Ascending aorta (tissue), 2 donors: ENCODE measurements at regions of chr14 and their contacts with region 1.

Region 1: DNA sequence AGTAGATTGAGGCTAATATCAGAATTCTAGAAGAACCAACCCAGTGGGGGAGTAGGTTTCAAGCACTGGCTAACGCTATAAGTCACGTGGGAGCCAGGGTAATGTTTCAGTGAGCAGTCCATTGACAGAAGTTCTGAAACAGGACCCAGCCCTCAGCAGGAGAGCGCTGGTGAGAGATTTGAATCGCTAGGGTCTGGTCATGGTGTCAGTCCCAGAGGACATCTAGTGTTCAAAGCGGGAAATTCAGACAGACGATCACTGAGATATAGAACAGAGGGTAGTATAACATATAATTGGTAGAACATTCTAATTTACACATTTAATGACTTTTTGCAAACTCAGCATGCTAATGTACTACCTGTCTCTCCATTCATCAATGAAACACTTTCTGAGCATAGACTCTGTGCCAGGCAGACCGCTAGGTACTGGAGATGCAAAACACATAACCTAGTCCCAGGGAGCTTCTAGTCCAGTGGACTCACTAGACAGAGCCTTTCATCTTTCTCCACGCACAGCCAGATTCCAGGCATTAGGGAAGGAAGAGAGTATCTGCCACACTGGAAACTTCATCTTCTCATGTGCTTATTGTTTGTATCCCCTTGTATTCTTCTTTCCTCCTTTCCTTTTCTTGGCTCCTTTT is 35.4 kb upstream of the RNASE3 start:
- DNase-seq: peak in 1 of 2 donors; percentile 70
- H3K4me3 ChIP-seq: no peak overlapping the region
- H3K27ac ChIP-seq: no peak overlapping the region
- H3K4me1 ChIP-seq: no peaks in the 10 kb centered on the region
- H3K27me3 ChIP-seq: no peaks in the 10 kb centered on the region
- CTCF ChIP-seq: peak; percentile 31 to 55 (median 52)

Region 2: GRCh38 chr14:20697273-20698017 is 158.3 kb before region 1 on chr14:
- intact Hi-C with region 1: loop called (anchors 5 kb)
- DNase-seq: no peak
- H3K4me3 ChIP-seq: no peak overlapping the region
- H3K27ac ChIP-seq: no peak overlapping the region
- H3K4me1 ChIP-seq: no peaks in the 10 kb centered on the region
- H3K27me3 ChIP-seq: no peaks in the 10 kb centered on the region
- CTCF ChIP-seq: peak; percentile 52 to 65 (median 55)

Region 3: DNA sequence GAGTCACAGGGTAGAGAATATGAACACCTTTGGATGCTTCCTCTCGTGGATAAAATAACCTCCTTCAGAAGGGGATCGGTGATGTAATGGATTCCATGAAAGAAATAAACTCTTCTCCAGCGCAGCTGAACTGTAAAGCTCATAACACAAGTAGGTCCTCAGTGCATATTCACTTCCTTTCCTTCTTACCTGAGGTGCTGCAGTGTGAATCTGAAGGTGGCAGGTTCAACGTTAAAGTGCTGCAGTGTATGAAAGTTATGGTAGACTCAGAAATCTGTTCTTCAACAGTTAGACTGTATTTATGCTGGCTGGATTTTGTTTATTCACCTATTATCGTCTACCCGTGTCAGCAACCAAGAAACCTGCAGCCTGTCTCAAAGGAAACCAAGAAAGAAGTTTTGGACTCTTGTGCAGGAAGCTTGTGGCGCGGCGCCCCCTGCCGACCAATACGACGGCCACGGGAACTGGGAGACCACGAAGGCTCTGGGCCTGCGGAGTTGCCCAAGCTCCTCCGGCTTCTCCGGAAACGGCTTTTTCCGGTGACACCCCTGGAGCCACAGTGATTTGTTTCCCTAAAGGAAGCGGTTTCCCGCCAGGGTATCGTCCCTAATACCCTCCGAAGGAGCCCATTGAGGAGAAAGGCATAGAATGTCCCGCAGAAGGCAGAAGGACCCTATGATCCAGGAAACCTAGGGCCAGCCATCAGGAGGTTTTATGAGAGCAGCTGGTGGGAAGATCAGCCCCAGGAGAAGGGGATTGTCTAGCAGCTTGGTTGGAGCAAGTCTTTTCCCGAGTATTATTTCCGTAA is 17.8 kb after region 1 on chr14:
- intact Hi-C with region 1: loop called (anchors 1 kb)
- DNase-seq: peak in 1 of 2 donors; percentile 89
- H3K4me3 ChIP-seq: no peak overlapping the region
- H3K27ac ChIP-seq: no peak overlapping the region
- H3K4me1 ChIP-seq: no peaks in the 10 kb centered on the region
- H3K27me3 ChIP-seq: no peaks in the 10 kb centered on the region
- CTCF ChIP-seq: peak; percentile 62 to 77 (median 76)

Region 4: GRCh38 chr14:20970983-20971704 is 115.4 kb after region 1 on chr14:
- intact Hi-C with region 1: loop called (anchors 1 kb)
- DNase-seq: peak; percentile 39 to 90
- H3K4me3 ChIP-seq: peak overlapping the region; percentile 58 to 75
- H3K27ac ChIP-seq: peak overlapping the region; percentile 80 to 85
- H3K4me1 ChIP-seq: peaks cover 0 to 5% of the 10 kb centered on the region in 2 donors
- H3K27me3 ChIP-seq: no peaks in the 10 kb centered on the region
- CTCF ChIP-seq: peak; percentile 86 to 93 (median 88)

Region 5: DNA sequence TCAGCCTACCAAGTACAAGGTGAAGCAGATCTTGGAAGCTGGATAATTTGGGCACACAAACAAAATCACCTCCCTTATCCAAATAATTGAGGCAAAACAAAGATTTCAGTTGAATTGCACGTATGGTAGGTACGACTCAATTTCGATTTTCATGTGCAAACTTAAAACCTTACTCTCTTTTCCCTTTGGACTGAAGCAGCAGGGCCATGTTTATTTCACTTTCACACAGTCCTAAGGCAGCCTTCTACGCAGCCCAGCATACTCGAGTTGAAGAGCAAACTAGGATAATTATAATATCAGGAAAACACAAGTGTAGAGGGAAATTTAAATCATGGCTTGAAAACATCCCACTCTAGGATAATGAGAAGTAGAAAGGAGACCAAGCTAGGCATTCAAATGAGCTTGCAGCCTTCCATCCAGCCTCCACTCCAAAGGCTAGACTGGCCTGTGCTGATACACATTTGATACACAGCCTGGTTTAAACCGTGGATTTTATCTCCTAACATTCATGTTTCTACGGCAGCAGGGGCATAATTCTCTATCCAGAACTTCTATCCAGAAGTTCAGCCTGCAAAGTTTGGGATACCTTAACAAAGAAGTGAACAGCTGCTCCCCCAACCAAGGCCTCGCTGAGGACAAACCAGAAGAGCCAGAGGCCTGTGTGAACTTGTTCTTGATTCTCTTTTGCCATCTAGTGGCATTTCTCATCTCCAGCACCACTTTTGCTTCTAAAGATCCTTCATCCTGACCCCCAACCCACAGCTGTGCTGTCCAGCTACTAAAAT is 184.0 kb after region 1 on chr14:
- intact Hi-C with region 1: loop called (anchors 5 kb)
- DNase-seq: no peak
- H3K4me3 ChIP-seq: peak overlapping the region in 1 of 2 donors; percentile 12
- H3K27ac ChIP-seq: peak overlapping the region; percentile 67 to 80
- H3K4me1 ChIP-seq: peaks cover 5 to 16% of the 10 kb centered on the region in 2 donors
- H3K27me3 ChIP-seq: no peaks in the 10 kb centered on the region
- CTCF ChIP-seq: peak; percentile 68 to 82 (median 73)